Natural killer cell (primary cell): ENCODE measurements at regions of chr15 and their contacts with region 1.

Region 1: GRCh38 chr15:61195116-61196002 is 33.7 kb downstream of the RORA start:
- DNase-seq: peak in 1 of 2 donors; percentile 54
- ATAC-seq: peak in 1 of 3 donors; percentile 64
- H3K4me3 ChIP-seq: no peak overlapping the region
- H3K4me3 Mint-ChIP-seq: no peak overlapping the region
- H3K27ac ChIP-seq: no peak overlapping the region
- H3K27ac Mint-ChIP-seq: no peak overlapping the region
- H3K4me1 ChIP-seq: no peaks in the 10 kb centered on the region
- H3K4me1 Mint-ChIP-seq: no peaks in the 10 kb centered on the region
- H3K27me3 ChIP-seq: no peaks in the 10 kb centered on the region
- H3K27me3 Mint-ChIP-seq: peaks cover 2 to 3% of the 10 kb centered on the region in 2 donors
- CTCF ChIP-seq: peak; percentile 67

Region 2: DNA sequence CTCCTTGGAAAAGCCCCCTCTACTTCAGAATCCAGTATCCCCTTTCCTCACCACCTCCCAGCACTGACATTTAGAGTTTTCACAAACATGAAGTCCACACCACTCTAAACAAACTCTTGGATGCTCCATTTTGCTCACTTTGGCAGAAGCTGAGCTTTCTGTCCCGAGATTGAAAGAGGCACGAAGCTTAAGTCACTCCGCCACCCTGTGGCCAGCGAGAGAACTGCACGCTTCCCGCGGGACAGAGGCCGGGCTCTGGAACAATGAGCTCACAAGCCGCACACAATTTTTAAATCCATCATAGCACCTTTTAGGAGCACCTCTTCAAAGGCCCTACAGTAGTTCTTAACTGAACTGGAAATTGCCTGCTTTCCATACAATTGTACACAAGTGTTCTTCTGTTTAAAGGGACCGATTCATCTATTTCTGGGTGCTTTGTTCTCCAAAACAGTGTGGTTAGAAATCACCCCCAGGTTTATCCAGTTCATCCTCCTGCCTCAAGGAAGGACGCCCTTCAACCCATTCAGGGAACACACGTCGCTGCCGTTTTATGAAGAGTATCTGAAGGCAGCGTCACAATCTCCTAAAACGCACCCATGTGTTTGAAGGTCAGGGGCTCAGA is 638.8 kb after region 1 on chr15:
- intact Hi-C with region 1: loop called (anchors 2 kb)
- DNase-seq: peak; percentile 63 to 82
- ATAC-seq: peak; percentile 76 to 86 (median 81)
- H3K4me3 ChIP-seq: no peak overlapping the region
- H3K4me3 Mint-ChIP-seq: no peak overlapping the region
- H3K27ac ChIP-seq: no peak overlapping the region
- H3K27ac Mint-ChIP-seq: no peak overlapping the region
- H3K4me1 ChIP-seq: peaks cover 14% of the 10 kb centered on the region
- H3K4me1 Mint-ChIP-seq: peaks cover 15 to 21% of the 10 kb centered on the region in 2 donors
- H3K27me3 ChIP-seq: peaks cover 3% of the 10 kb centered on the region
- H3K27me3 Mint-ChIP-seq: peaks cover 5 to 15% of the 10 kb centered on the region in 2 donors
- CTCF ChIP-seq: peak; percentile 95